ENCODE measurements at regions of chr19 and their contacts with region 1.

Region 1: GRCh38 chr19:34330116-34330515 is 34.9 kb upstream of the GPI start:
- DNase-seq: peak in 1 of 2 donors; percentile 70
- H3K4me3 ChIP-seq: no peak overlapping the region
- CTCF ChIP-seq: no peak
- POLR2A ChIP-seq: no peak

Region 2: GRCh38 chr19:34288381-34288780 is 41.7 kb before region 1 on chr19:
- intact Hi-C with region 1: loop called (anchors 1 kb)
- DNase-seq: no peak
- H3K4me3 ChIP-seq: no peak overlapping the region
- CTCF ChIP-seq: no peak
- POLR2A ChIP-seq: no peak

Region 3: GRCh38 chr19:34618410-34618809 is 288.3 kb after region 1 on chr19:
- intact Hi-C with region 1: no loop called
- DNase-seq: no peak
- H3K4me3 ChIP-seq: no peak overlapping the region
- CTCF ChIP-seq: no peak
- POLR2A ChIP-seq: no peak